ENCODE measurements at regions of chr20 and their contacts with region 1.

Region 1: GRCh38 chr20:48620519-48621254 is 207.1 kb downstream of the PREX1 start:
- DNase-seq: peak; percentile 96
- ATAC-seq: peak; percentile 77
- H3K4me3 ChIP-seq: peak overlapping the region; percentile 65
- H3K27ac ChIP-seq: peak overlapping the region; percentile 92
- H3K4me1 ChIP-seq: peaks cover 25% of the 10 kb centered on the region
- H3K27me3 ChIP-seq: no peaks in the 10 kb centered on the region
- CTCF ChIP-seq: peak; percentile 85

Region 2: DNA sequence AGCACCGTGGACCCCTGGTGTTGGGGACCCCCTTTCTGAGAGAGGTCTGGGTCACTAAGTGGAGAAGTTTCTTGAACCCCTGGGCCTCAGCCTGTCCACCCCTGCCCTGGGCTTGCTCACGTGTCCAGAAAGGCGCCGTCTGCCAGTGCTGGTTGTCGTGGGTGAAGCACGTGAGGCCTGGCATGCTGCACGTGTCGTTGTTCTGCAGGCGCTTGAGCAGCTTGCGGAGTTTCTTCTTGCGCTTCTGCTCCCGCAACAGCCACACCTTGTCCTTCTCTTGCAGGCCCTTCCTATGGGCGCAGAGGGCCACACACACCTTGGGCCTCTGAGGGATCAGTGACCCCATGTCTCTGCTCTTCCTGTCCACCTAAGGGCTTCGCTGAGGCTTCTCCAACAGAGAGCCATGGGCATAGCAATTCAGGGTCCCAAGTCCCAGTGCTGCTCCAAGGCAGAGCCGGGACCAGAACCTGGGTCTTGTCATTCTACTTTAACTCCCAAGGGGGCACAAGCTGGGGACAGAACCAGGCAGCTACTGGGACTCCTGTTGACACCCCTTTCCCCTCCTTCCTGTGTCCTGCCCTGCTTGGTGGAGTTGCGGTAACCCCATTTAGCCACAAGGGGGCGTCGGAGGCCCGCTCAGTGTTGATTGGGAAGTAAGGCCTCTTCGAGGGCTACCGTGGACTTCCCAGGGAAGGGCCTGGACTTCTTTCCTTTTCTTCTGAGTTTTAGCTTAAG is 957.2 kb before region 1 on chr20:
- CTCF ChIA-PET with region 1: interaction called, 7 read pairs
- POLR2A ChIA-PET with region 1: no interaction called
- intact Hi-C with region 1: loop called (anchors 2 kb)
- DNase-seq: peak; percentile 86
- ATAC-seq: peak; percentile 90
- H3K4me3 ChIP-seq: no peak overlapping the region
- H3K27ac ChIP-seq: no peak overlapping the region
- H3K4me1 ChIP-seq: no peaks in the 10 kb centered on the region
- H3K27me3 ChIP-seq: no peaks in the 10 kb centered on the region
- CTCF ChIP-seq: peak; percentile 98

Region 3: GRCh38 chr20:47785854-47786764 is 834.6 kb before region 1 on chr20:
- CTCF ChIA-PET with region 1: interaction called, 5 read pairs
- POLR2A ChIA-PET with region 1: no interaction called
- intact Hi-C with region 1: loop called (anchors 1 kb)
- DNase-seq: peak; percentile 90
- ATAC-seq: peak; percentile 35
- H3K4me3 ChIP-seq: peak overlapping the region; percentile 83
- H3K27ac ChIP-seq: peak overlapping the region; percentile 87
- H3K4me1 ChIP-seq: peaks cover 66% of the 10 kb centered on the region
- H3K27me3 ChIP-seq: no peaks in the 10 kb centered on the region
- CTCF ChIP-seq: peak; percentile 96

Region 4: DNA sequence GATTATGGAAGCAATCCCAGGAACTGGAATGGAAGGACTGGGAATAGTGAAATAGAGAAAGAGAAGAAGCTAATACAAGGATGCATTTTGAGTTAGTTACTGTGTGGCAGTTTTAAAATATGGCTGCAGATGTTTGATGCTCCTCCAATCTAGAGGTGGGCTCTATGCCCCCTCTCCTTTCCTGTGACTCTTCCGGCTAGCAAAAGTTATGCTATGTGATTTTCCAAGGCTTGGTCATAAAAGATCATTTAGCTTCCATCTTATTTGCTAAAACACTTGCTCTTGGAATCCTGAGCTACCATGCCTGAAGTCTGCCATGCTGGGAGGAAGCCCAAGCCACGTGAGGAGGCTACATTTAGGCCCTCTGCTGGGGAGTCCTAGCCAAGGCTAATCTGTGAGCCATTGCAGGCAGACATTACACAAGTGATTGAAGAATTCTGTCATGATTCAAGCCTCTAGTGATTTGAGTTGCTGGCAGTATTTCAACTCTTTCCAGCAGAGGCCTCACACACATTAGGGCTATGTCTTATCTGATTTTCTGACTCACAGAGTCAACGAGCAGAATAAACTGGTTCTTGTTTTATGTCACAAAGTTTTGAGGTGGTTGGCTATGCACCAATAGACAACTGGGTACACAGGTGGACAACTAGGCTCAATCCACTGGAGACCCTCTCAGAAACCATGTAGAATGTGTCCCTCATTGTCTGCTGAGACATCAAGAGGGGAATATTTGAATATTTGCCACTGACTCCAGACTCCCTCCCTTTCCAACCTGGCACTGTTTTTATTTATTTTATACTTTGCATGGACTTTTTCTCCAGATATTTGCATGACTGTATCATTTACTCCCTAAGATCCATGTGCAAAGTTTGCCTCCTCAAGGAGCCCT is 608.2 kb before region 1 on chr20:
- CTCF ChIA-PET with region 1: no interaction called
- POLR2A ChIA-PET with region 1: no interaction called
- intact Hi-C with region 1: loop called (anchors 2 kb)
- DNase-seq: peak; percentile 98
- ATAC-seq: peak; percentile 88
- H3K4me3 ChIP-seq: no peak overlapping the region
- H3K27ac ChIP-seq: peak overlapping the region; percentile 84
- H3K4me1 ChIP-seq: peaks cover 34% of the 10 kb centered on the region
- H3K27me3 ChIP-seq: no peaks in the 10 kb centered on the region
- CTCF ChIP-seq: peak; percentile 84

Region 5: GRCh38 chr20:48295445-48295963 is 325.2 kb before region 1 on chr20:
- CTCF ChIA-PET with region 1: interaction called, 24 read pairs
- POLR2A ChIA-PET with region 1: no interaction called
- intact Hi-C with region 1: loop called (anchors 1 kb)
- DNase-seq: peak; percentile 98
- ATAC-seq: peak; percentile 85
- H3K4me3 ChIP-seq: no peak overlapping the region
- H3K27ac ChIP-seq: peak overlapping the region; percentile 36
- H3K4me1 ChIP-seq: peaks cover 50% of the 10 kb centered on the region
- H3K27me3 ChIP-seq: no peaks in the 10 kb centered on the region
- CTCF ChIP-seq: peak; percentile 83

Region 6: DNA sequence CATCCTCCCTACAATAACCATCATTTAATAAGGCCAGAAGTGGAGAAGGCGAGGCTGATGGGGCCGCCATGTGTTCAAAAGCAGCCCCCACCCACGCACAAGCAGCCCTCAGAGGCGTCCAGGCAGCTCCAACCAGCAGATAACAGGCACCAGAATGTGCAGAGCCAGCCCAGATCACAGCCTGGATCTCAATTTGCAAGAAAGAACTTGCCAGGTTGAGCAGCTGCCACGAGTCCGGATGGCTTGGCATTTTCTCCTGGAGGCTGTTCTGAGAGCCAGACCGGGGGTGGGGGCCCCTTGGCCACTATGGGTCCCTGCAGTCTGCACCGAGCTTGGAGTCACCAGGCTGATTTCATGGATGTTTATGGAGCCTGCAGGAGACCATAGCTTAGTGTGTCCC is 131.0 kb before region 1 on chr20:
- CTCF ChIA-PET with region 1: no interaction called
- POLR2A ChIA-PET with region 1: no interaction called
- intact Hi-C with region 1: loop called (anchors 1 kb)
- DNase-seq: no peak
- ATAC-seq: no peak
- H3K4me3 ChIP-seq: no peak overlapping the region
- H3K27ac ChIP-seq: no peak overlapping the region
- H3K4me1 ChIP-seq: peaks cover 41% of the 10 kb centered on the region
- H3K27me3 ChIP-seq: no peaks in the 10 kb centered on the region
- CTCF ChIP-seq: no peak

Region 7: GRCh38 chr20:48648550-48648951 is 27.9 kb after region 1 on chr20:
- CTCF ChIA-PET with region 1: no interaction called
- POLR2A ChIA-PET with region 1: no interaction called
- intact Hi-C with region 1: no loop called
- DNase-seq: peak; percentile 13
- ATAC-seq: no peak
- H3K4me3 ChIP-seq: no peak overlapping the region
- H3K27ac ChIP-seq: no peak overlapping the region
- H3K4me1 ChIP-seq: no peaks in the 10 kb centered on the region
- H3K27me3 ChIP-seq: no peaks in the 10 kb centered on the region
- CTCF ChIP-seq: no peak

Measured in PC-3 (cell line).